Naive thymus-derived CD4-positive, alpha-beta T cell (primary cell): ENCODE measurements at regions of chr17 and their contacts with region 1.

Region 1: DNA sequence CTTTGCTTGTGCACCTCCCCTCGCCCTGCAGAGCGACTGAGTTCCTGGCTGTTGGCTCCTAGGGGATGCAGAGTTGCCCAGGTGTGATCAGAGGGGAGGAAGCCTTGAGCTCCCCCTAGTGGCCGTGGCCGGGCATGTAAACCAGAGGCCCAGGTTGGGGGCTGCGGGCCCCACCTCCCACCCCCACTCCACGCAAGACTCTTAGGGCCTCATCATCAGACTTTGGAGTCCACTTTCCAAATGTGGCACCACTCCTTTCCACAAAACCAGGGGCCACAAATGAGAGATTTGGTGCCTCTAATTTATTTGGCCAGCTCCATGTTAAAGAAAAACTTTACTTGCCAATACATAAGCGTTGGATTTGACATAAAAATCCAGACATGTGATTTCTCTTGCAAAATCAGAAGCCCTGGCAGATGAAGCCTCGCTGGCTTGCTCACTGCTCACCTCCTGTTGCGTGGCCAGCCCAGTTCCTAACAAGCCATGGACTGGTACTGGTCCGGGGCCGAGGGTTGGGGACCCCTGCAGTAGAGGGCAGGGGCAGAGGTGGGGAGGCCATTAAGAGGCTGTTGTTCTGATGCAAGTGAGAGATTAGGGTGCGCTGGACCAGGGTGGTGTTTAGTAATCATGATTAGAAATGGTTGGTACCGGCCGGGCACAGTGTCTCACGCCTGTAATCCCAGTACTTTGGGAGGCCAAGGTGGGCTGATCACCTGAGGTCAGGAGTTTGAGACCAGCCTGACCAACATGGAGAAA is 28.7 kb upstream of the GAS7 start:
- DNase-seq: peak in 7 of 9 donors; percentile 2 to 32 (median 18)
- ATAC-seq: peak; percentile 61
- H3K4me3 ChIP-seq: no peak overlapping the region
- H3K4me3 Mint-ChIP-seq: no peak overlapping the region
- H3K27ac ChIP-seq: no peak overlapping the region
- H3K27ac Mint-ChIP-seq: no peak overlapping the region
- H3K4me1 ChIP-seq: no peaks in the 10 kb centered on the region
- H3K4me1 Mint-ChIP-seq: no peaks in the 10 kb centered on the region
- H3K27me3 ChIP-seq: no peaks in the 10 kb centered on the region
- H3K27me3 Mint-ChIP-seq: peaks cover 0 to 5% (median 0%) of the 10 kb centered on the region in 5 donors

Region 2: DNA sequence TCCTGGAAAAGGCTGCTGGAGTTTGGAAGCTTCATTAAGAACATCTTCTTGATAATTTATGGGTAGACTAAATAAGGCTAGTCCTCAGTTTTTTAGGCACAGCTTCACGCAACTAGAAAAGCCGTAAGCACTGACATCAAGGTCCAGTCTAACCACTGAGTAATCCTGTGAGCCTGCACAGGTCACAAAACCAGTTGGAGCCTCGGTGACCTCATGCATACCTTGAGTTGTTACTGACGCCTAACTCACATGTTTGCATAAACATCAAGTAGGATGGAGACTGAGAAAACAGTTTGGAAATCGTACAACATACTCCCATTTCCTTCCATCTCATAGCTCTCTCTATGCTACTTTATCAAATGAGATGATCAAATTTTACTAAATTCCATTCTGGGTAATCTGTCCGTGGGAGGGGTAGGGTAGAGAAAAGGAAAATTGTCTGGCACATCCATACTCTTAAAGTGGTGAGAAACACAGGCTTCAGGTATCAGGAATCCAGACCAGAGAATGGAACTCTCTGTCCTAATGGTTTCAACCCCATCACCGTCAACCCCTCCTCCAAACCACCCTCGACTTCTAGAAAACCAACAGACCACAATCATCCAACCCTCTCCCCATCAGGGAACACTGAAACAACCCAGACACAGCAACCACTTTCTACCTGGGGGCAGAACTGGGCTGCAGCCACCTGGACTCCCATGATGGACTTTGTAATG is 258.0 kb before region 1 on chr17:
- CTCF ChIA-PET with region 1: no interaction called
- POLR2A ChIA-PET with region 1: no interaction called
- intact Hi-C with region 1: loop called in 1 of 2 experiments (anchors 5 kb)
- DNase-seq: no peak
- ATAC-seq: no peak
- H3K4me3 ChIP-seq: no peak overlapping the region
- H3K4me3 Mint-ChIP-seq: no peak overlapping the region
- H3K27ac ChIP-seq: no peak overlapping the region
- H3K27ac Mint-ChIP-seq: no peak overlapping the region
- H3K4me1 ChIP-seq: no peaks in the 10 kb centered on the region
- H3K4me1 Mint-ChIP-seq: peaks cover 0 to under 1% (median 0%) of the 10 kb centered on the region in 7 donors
- H3K27me3 ChIP-seq: no peaks in the 10 kb centered on the region
- H3K27me3 Mint-ChIP-seq: peaks cover 0 to 4% (median 0%) of the 10 kb centered on the region in 5 donors